ENCODE measurements at regions of chr2 and their contacts with region 1.

Region 1: GRCh38 chr2:218406209-218406948 is 6.7 kb downstream of the CTDSP1 start:
- DNase-seq: peak; percentile 93 to 96
- ATAC-seq: peak; percentile 82 to 83
- H3K4me3 ChIP-seq: peak overlapping the region; percentile 51 to 72 (median 55)
- H3K27ac ChIP-seq: peak overlapping the region; percentile 81 to 93 (median 88)
- H3K4me1 ChIP-seq: peaks cover 36 to 39% of the 10 kb centered on the region in 2 donors
- H3K27me3 ChIP-seq: no peaks in the 10 kb centered on the region
- CTCF ChIP-seq: peak; percentile 78 to 91 (median 85)
- POLR2A ChIP-seq: no peak

Region 2: GRCh38 chr2:218046238-218046637 is 360.1 kb before region 1 on chr2:
- in situ Hi-C with region 1: no loop called
- intact Hi-C with region 1: no loop called
- DNase-seq: no peak
- ATAC-seq: peak in 1 of 2 donors; percentile 51
- H3K4me3 ChIP-seq: no peak overlapping the region
- H3K27ac ChIP-seq: no peak overlapping the region
- H3K4me1 ChIP-seq: no peaks in the 10 kb centered on the region
- H3K27me3 ChIP-seq: no peaks in the 10 kb centered on the region
- CTCF ChIP-seq: no peak
- POLR2A ChIP-seq: no peak

Region 3: GRCh38 chr2:218466016-218466521 is 59.7 kb after region 1 on chr2:
- in situ Hi-C with region 1: loop called in 3 of 4 experiments (anchors 5 to 10 kb)
- intact Hi-C with region 1: loop called (anchors 2 kb)
- DNase-seq: no peak
- ATAC-seq: no peak
- H3K4me3 ChIP-seq: no peak overlapping the region
- H3K27ac ChIP-seq: no peak overlapping the region
- H3K4me1 ChIP-seq: no peaks in the 10 kb centered on the region
- H3K27me3 ChIP-seq: no peaks in the 10 kb centered on the region
- CTCF ChIP-seq: peak in 4 of 5 experiments; percentile 27 to 47 (median 41)
- POLR2A ChIP-seq: no peak

Region 4: DNA sequence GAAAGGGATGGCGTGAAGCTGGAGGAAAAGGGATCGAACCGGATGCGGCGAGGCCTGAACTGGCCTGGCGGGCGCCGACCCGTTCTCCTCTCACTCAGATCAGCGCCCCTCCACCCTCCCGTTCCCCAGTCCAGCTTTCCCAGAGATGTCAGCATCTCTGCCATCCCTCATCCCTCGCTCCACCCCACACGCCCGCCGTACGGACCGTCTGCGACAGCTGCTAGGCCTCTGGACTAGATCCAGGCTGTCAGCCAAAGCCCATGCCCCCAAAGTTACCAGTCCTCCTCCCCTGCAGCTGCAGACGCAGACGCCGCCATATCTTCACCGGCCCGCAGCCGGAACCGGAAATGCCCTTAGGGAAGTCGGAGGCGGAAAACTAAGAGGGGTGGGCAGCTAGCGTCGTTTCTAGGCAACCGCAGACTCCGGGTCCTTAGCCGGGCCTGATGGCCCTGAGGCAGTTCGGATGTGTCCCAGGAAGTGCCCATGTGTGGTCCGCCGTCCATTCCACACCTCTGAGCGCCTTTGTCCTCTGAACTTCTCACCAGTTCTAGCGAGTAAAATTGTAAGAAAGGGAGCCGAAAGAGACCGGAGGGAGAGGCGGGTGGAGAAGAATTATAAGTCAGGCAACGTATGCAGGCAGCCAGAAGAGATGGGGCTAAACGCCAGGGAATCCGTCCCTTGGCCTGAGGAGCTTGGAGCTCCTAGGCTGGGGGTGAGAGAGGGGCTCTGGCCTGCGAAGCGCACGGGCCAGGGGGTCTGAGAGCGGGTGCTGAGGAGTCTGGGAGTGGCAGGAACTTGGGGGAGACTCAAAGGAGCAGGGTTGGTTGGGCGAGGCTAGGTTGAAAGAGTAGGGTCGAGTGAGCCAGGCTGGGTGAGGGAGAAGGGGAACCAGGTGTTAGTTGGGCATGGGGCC is 265.5 kb after region 1 on chr2 and contains the starts of genes RNF25 and STK36:
- in situ Hi-C with region 1: loop called (anchors 25 kb)
- intact Hi-C with region 1: no loop called
- DNase-seq: peak; percentile 70 to 75
- ATAC-seq: peak; percentile 97
- H3K4me3 ChIP-seq: peak within 1 kb of the TSS; percentile 76 to 97 (median 89)
- H3K27ac ChIP-seq: peak within 1 kb of the TSS; percentile 73 to 84 (median 82)
- H3K4me1 ChIP-seq: peaks cover 13% of the 10 kb centered on the region in 2 donors
- H3K27me3 ChIP-seq: no peaks in the 10 kb centered on the region
- CTCF ChIP-seq: no peak
- POLR2A ChIP-seq: peak; percentile 50 to 79
- total RNA-seq, gene RNF25: 11.7 to 39.1 (median 26.1) TPM
- total RNA-seq, gene STK36: 3.0 to 16.3 (median 7.6) TPM

Region 5: DNA sequence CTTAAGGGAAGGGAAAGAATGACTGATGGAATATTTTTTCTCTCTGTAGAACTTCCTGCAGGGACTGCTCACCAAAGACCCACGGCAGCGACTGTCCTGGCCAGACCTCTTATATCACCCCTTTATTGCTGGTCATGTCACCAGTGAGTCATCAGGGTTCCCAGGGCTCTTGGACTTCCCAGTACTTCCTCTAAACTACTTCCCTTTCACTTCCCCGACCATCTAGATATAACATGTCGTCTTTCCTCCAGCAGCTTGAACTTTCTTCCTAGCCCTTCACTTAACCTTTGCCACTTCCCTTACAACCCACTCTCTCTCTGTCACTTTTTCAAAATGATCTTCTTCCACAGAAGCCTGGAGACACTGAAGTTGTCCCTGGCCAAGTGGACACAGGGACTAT is 272.7 kb after region 1 on chr2:
- in situ Hi-C with region 1: loop called (anchors 25 kb)
- intact Hi-C with region 1: no loop called
- DNase-seq: no peak
- ATAC-seq: no peak
- H3K4me3 ChIP-seq: no peak overlapping the region
- H3K27ac ChIP-seq: no peak overlapping the region
- H3K4me1 ChIP-seq: no peaks in the 10 kb centered on the region
- H3K27me3 ChIP-seq: no peaks in the 10 kb centered on the region
- CTCF ChIP-seq: no peak
- POLR2A ChIP-seq: no peak

Region 6: DNA sequence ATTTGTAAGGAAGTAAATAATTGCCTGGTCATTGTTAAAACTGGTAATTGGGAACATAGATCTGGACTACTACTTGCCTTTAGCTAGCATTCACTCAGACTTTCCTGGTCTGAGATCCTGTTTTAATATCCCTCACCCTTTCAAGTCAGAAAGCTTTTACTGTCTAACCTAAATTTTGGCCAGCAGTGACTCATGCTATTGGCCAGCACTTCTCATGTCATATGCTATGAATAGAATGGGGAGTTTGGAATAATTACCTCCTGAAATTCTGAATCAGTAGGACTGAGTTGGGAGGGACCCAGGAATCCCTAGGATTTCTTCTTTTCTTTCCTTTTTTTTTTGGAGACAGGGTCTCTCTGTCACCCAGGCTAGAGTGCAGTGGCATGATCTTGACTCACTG is 284.9 kb after region 1 on chr2:
- in situ Hi-C with region 1: loop called in 2 of 4 experiments (anchors 25 kb)
- intact Hi-C with region 1: loop called (anchors 2 kb)
- DNase-seq: no peak
- ATAC-seq: peak; percentile 43 to 71
- H3K4me3 ChIP-seq: no peak overlapping the region
- H3K27ac ChIP-seq: peak overlapping the region in 2 of 4 donors; percentile 33 to 40
- H3K4me1 ChIP-seq: peaks cover 0 to 6% of the 10 kb centered on the region in 2 donors
- H3K27me3 ChIP-seq: no peaks in the 10 kb centered on the region
- CTCF ChIP-seq: no peak
- POLR2A ChIP-seq: no peak

Measured in gastrocnemius medialis (tissue), 4 donors.